Tibial artery (tissue), 4 donors: ENCODE measurements at regions of chr1 and their contacts with region 1.

Region 1: DNA sequence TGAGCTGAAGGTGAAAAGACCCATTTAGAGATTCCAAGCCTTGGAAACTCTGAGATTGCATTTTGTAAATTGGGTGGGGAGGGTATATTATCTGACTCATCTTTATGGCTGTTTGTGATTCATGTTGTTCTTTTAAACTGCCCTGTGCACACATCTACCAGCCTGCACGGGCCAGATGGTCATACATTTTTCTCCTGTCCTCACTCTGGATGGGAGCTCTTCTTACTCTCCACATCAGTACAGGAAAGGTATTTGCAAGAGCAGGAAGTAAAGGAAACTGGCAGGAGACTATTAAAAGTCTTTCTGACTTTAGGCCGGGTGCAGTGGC is 14.3 kb upstream of the NMNAT2 start:
- DNase-seq: no peak
- H3K4me3 ChIP-seq: no peak overlapping the region
- H3K27ac ChIP-seq: no peak overlapping the region
- H3K4me1 ChIP-seq: no peaks in the 10 kb centered on the region
- H3K27me3 ChIP-seq: peaks cover 0 to 3% of the 10 kb centered on the region in 2 donors
- CTCF ChIP-seq: no peak

Region 2: GRCh38 chr1:183419399-183419798 is 13.1 kb before region 1 on chr1:
- intact Hi-C with region 1: loop called (anchors 1 kb)
- DNase-seq: no peak
- H3K4me3 ChIP-seq: no peak overlapping the region
- H3K27ac ChIP-seq: no peak overlapping the region
- H3K4me1 ChIP-seq: peaks cover 0 to 22% (median 16%) of the 10 kb centered on the region in 4 donors
- H3K27me3 ChIP-seq: peaks cover 0 to 52% of the 10 kb centered on the region in 2 donors
- CTCF ChIP-seq: no peak